ENCODE measurements at regions of chr1 and their contacts with region 1.

Region 1: GRCh38 chr1:59296358-59297256 is at the start of gene FGGY:
- DNase-seq: peak; percentile 97 to 99
- ATAC-seq: peak; percentile 93 to 98 (median 94)
- H3K4me3 ChIP-seq: peak within 1 kb of the TSS; percentile 45 to 68 (median 61)
- H3K27ac ChIP-seq: peak within 1 kb of the TSS; percentile 92 to 99 (median 97)
- H3K4me1 ChIP-seq: peaks cover 0 to 50% (median 17%) of the 10 kb centered on the region in 9 donors
- H3K27me3 ChIP-seq: no peaks in the 10 kb centered on the region
- CTCF ChIP-seq: peak in 1 of 9 donors; percentile 6
- total RNA-seq, gene FGGY: 26.3 to 51.8 (median 36.6) TPM

Region 2: DNA sequence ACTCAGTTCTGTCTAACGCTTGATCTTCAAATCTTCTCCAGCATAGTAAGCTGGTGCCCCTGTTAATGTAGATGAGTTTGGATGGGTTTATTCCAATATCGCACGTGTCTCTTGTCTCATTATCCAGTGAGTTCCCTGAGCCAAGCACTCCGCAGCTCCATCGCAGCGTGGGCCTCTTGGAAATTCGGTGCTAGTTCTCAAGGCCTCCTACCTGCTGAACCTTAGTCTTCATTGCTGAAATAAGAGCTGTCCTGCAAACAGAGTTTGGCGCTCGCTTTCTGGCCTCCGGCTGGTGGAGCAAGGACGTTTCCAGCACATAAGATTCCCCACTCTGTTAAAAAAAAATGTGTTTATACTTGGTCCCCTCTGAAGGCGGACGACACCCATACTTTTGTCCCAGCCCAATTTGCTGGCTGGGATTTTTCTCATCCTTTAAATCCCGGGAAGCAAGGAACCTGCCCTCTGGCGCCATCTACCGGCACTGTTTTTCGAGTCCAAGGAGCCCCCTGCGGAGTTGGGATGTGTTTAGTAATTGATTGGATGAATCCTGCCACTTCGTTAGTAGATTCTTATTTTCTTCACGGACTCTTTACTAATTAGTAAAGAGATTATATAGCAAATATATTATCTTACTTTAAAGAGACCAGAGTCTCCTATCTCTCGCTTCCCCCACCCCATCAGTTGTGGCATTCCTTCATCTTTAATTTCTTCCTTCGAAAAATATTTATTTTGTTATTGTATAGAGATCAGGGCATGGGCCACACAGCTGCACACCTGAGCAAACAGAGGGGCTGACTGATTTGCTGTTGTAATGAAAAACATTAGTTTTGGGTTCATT is 527.4 kb before region 1 on chr1:
- intact Hi-C with region 1: loop called in 1 of 10 experiments (anchors 10 kb)
- DNase-seq: peak; percentile 85 to 86
- ATAC-seq: peak in 3 of 8 donors; percentile 30 to 42 (median 37)
- H3K4me3 ChIP-seq: no peak overlapping the region
- H3K27ac ChIP-seq: no peak overlapping the region
- H3K4me1 ChIP-seq: peaks cover 8 to 30% (median 23%) of the 10 kb centered on the region in 9 donors
- H3K27me3 ChIP-seq: no peaks in the 10 kb centered on the region
- CTCF ChIP-seq: peak; percentile 68 to 91 (median 89)

Region 3: GRCh38 chr1:58903514-58904298 is 392.9 kb before region 1 on chr1:
- intact Hi-C with region 1: loop called in 7 of 10 experiments (anchors 2 to 10 kb)
- DNase-seq: peak; percentile 95 to 96
- ATAC-seq: peak; percentile 93 to 99 (median 96)
- H3K4me3 ChIP-seq: peak overlapping the region in 9 of 10 donors; percentile 35 to 67 (median 58)
- H3K27ac ChIP-seq: peak overlapping the region; percentile 90 to 99 (median 96)
- H3K4me1 ChIP-seq: peaks cover 5 to 43% (median 27%) of the 10 kb centered on the region in 9 donors
- H3K27me3 ChIP-seq: no peaks in the 10 kb centered on the region
- CTCF ChIP-seq: peak in 3 of 9 donors; percentile 6 to 7 (median 6)

Region 4: DNA sequence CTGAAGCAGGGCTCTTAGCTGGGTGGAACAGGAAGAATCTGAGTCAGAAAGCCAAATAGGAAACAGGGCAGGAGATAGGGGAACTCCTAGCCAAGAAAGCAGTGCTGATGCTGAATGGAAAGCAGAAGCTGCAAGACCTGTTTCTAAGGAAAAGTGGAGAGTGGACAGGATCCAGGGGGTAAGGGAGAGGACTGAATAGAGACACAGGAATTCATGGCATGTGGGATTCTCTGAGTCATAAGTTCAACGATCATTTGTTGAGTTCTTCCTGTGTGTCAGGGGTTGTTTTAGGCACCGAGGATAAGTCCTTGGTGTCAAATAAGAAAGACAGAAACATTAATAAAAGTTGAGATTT is 153.5 kb before region 1 on chr1:
- intact Hi-C with region 1: loop called in 5 of 10 experiments (anchors 1 to 10 kb)
- DNase-seq: no peak
- ATAC-seq: peak in 6 of 8 donors; percentile 18 to 49 (median 33)
- H3K4me3 ChIP-seq: no peak overlapping the region
- H3K27ac ChIP-seq: peak overlapping the region in 8 of 10 donors; percentile 15 to 86 (median 82)
- H3K4me1 ChIP-seq: peaks cover 5 to 74% (median 64%) of the 10 kb centered on the region in 9 donors
- H3K27me3 ChIP-seq: no peaks in the 10 kb centered on the region
- CTCF ChIP-seq: no peak

Region 5: DNA sequence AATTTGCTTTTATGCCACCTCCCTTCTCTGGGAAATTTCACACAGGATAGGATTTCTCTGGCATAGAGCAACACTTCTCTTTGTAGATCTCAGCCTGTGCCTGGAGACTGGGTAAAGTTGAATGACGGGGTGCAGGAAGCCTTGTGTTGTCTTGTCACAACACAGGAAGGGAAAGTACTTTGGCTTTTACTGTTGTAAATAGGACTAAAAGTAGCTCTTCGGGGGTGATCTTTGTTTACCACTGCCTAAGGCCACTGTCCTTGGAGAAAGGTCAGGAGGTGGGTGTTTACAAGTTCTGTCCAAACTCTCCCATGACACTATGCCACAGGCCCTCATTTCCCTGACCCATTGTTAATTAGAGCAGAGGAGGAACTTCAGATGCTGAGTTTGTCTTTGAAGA is 140.0 kb after region 1 on chr1:
- intact Hi-C with region 1: loop called in 1 of 10 experiments (anchors 5 kb)
- DNase-seq: no peak
- ATAC-seq: no peak
- H3K4me3 ChIP-seq: no peak overlapping the region
- H3K27ac ChIP-seq: no peak overlapping the region
- H3K4me1 ChIP-seq: peaks cover 0 to 62% (median 20%) of the 10 kb centered on the region in 9 donors
- H3K27me3 ChIP-seq: no peaks in the 10 kb centered on the region
- CTCF ChIP-seq: no peak

Region 6: DNA sequence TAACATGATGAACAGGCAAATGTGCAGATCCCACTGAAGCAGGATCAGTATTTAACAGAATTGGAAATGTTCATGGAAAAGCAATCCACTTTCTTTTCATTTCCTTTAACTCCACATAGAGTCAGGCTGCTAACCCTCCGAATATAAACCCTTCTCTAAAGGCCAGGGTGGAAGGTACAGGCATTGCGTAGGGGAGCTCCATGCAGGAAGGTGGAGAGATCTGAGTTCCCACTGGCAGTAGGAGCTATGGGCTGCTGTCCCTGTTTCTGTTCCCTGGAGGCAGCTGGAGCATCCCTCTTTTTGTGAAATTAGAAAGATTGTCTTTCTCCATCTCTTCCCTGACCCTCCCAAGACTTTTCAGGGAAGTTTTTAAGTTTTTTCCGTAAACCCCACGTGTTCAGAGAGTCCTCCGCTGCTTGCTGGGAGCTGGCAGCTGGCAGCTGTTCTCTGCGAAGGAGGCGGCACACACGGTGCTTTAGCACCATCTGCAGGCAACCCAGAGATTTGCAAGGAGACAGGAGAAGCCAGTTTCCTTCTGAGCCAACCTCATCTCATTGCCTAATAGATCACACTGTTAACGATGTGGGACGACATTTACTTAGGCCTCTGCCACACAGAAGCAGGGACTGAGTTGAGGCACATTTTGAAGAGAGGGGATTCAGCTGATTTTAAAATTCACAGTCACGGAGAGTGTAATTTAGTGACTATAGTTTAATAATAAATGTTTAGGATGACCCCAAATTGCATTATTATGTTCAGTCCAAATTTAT is 462.7 kb after region 1 on chr1:
- intact Hi-C with region 1: loop called in 3 of 10 experiments (anchors 5 to 10 kb)
- DNase-seq: peak; percentile 76 to 79
- ATAC-seq: peak; percentile 92 to 96 (median 94)
- H3K4me3 ChIP-seq: peak overlapping the region in 9 of 10 donors; percentile 14 to 42 (median 29)
- H3K27ac ChIP-seq: peak overlapping the region in 9 of 10 donors; percentile 13 to 75 (median 55)
- H3K4me1 ChIP-seq: peaks cover 0 to 16% (median 7%) of the 10 kb centered on the region in 9 donors
- H3K27me3 ChIP-seq: no peaks in the 10 kb centered on the region
- CTCF ChIP-seq: peak; percentile 92 to 99 (median 96)